WTC11 (cell line): ENCODE measurements at regions of chr15 and their contacts with region 1.

Region 1: GRCh38 chr15:83657549-83657948 is 3.6 kb downstream of the ADAMTSL3 start:
- DNase-seq: peak; percentile 48
- ATAC-seq: peak; percentile 19
- H3K4me3 Mint-ChIP-seq: no peak overlapping the region
- H3K27ac Mint-ChIP-seq: no peak overlapping the region
- H3K4me1 Mint-ChIP-seq: peaks cover 4% of the 10 kb centered on the region; the same call in 1 of the 2 replicates
- H3K27me3 Mint-ChIP-seq: peaks cover 42% of the 10 kb centered on the region
- CTCF ChIP-seq: peak; percentile 45; the same call in 1 of the 2 replicates

Region 2: GRCh38 chr15:83549623-83550022 is 107.9 kb before region 1 on chr15:
- CTCF ChIA-PET with region 1: no interaction called
- POLR2A ChIA-PET with region 1: no interaction called
- DNase-seq: no peak
- ATAC-seq: no peak
- H3K4me3 Mint-ChIP-seq: no peak overlapping the region
- H3K27ac Mint-ChIP-seq: no peak overlapping the region
- H3K4me1 Mint-ChIP-seq: peaks cover 45% of the 10 kb centered on the region
- H3K27me3 Mint-ChIP-seq: peaks cover 14% of the 10 kb centered on the region
- CTCF ChIP-seq: no peak

Region 3: DNA sequence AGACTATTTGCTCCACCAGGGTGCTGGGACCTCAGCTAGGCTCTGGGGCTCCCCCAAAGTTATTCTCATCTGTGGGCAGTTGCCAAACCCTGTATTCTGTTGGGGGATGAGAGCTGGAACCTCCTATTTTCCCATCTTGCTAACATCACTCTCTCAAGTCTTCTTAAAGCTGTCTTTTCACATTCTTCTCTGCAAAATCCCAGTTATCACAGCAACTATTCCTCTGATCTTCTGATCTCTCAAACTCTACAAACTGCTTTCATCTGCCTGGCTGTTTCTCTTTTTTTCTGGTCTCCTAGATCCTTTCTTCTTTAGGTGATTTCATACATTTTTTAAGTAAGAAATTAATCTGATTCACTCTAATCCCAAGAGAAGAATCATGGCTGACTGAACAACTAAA is 14.3 kb before region 1 on chr15:
- CTCF ChIA-PET with region 1: interaction called, 10 read pairs
- POLR2A ChIA-PET with region 1: no interaction called
- DNase-seq: no peak
- ATAC-seq: no peak
- H3K4me3 Mint-ChIP-seq: no peak overlapping the region
- H3K27ac Mint-ChIP-seq: no peak overlapping the region
- H3K4me1 Mint-ChIP-seq: no peaks in the 10 kb centered on the region
- H3K27me3 Mint-ChIP-seq: 0 out of 2 replicates have a peak, but pooled peaks cover 2% of the 10 kb centered on the region
- CTCF ChIP-seq: no peak

Region 4: DNA sequence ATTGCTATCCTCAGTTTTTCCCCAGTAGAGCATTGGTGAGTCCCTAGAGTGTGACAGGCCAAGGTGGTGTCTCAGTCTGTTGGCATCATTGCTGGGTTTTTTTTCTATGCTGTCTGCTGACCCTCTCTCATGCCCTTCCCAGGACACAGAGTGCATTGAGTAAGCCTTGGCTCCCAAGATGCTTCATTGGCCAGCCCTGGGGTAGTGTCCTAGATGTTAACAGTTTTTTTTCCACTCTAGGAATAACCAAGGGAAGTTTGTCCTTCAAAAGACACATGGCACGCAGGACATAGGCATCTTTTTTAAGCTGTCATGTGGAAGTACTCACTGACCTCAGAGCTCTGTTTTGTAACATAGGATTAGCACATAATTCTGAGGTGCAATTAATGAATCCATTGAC is 15.8 kb after region 1 on chr15:
- CTCF ChIA-PET with region 1: interaction called, 16 read pairs
- POLR2A ChIA-PET with region 1: no interaction called
- DNase-seq: no peak
- ATAC-seq: no peak
- H3K4me3 Mint-ChIP-seq: no peak overlapping the region
- H3K27ac Mint-ChIP-seq: no peak overlapping the region
- H3K4me1 Mint-ChIP-seq: no peaks in the 10 kb centered on the region
- H3K27me3 Mint-ChIP-seq: no peaks in the 10 kb centered on the region
- CTCF ChIP-seq: no peak